ENCODE measurements at regions of chr6 and their contacts with region 1.

Region 1: DNA sequence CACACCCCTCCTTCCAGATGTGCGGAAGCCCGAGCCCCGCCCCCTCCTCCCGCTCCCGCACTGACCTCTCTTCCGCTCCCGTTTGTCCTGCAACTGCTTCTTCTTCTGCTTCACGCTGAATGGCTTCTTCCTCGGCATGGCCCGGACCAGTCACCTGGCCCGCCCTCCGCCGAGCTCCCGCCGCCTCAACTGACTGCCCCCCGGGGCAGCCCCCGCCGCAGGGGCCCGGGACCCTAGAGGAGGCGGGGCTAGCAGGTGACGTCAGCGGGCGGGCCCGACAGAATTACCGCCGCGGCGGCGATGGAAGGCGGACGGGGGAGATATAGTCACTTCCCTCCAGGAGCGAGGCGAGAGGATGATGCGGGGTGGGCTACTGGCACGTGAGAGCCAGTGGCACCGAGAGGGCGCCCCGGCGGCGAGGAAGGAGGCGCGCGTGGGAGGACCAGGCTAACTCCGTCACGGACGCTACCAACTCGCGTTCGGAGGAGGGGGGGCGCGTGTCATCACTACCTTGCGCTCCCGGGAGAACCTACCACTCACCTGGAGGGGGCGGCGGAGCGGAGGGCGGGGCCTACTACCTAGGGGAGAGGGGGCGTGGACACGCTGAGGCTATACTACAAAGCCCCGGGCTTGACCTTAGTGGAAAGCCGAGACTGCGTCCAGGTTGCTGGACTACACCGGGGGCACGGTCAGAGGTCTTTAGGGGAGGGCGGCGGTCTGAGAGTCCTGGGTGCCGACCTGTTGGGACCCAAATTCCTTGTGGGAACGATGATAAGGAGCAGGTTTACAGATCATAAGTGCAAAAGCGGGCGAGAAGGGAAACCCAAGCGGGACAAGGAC is at the start of gene GNL1:
- DNase-seq: peak; percentile 96
- H3K4me3 Mint-ChIP-seq: peak within 1 kb of the TSS; percentile 96
- H3K27ac Mint-ChIP-seq: peak within 1 kb of the TSS; percentile 99
- H3K4me1 Mint-ChIP-seq: peaks cover 36% of the 10 kb centered on the region
- H3K27me3 Mint-ChIP-seq: no peaks in the 10 kb centered on the region
- total RNA-seq, gene GNL1: 86.3 and 92.4 TPM in 2 replicates

Region 2: GRCh38 chr6:30212865-30213666 is 343.2 kb before region 1 on chr6 and contains the start of gene TRIM26:
- intact Hi-C with region 1: loop called (anchors 5 kb)
- DNase-seq: peak; percentile 98
- H3K4me3 Mint-ChIP-seq: peak within 1 kb of the TSS; percentile 88
- H3K27ac Mint-ChIP-seq: peak within 1 kb of the TSS; percentile 97
- H3K4me1 Mint-ChIP-seq: peaks cover 57% of the 10 kb centered on the region
- H3K27me3 Mint-ChIP-seq: no peaks in the 10 kb centered on the region
- total RNA-seq, gene TRIM26: 61.6 and 64.7 TPM in 2 replicates

Region 3: GRCh38 chr6:30489081-30490025 is 66.9 kb before region 1 on chr6 and contains the start of gene HLA-E:
- intact Hi-C with region 1: loop called (anchors 1 kb)
- DNase-seq: peak; percentile 91
- H3K4me3 Mint-ChIP-seq: peak within 1 kb of the TSS; percentile 97
- H3K27ac Mint-ChIP-seq: peak within 1 kb of the TSS; percentile 99
- H3K4me1 Mint-ChIP-seq: peaks cover 64% of the 10 kb centered on the region
- H3K27me3 Mint-ChIP-seq: peaks cover 3% of the 10 kb centered on the region
- total RNA-seq, gene HLA-E: 476 and 483 TPM in 2 replicates

Region 4: DNA sequence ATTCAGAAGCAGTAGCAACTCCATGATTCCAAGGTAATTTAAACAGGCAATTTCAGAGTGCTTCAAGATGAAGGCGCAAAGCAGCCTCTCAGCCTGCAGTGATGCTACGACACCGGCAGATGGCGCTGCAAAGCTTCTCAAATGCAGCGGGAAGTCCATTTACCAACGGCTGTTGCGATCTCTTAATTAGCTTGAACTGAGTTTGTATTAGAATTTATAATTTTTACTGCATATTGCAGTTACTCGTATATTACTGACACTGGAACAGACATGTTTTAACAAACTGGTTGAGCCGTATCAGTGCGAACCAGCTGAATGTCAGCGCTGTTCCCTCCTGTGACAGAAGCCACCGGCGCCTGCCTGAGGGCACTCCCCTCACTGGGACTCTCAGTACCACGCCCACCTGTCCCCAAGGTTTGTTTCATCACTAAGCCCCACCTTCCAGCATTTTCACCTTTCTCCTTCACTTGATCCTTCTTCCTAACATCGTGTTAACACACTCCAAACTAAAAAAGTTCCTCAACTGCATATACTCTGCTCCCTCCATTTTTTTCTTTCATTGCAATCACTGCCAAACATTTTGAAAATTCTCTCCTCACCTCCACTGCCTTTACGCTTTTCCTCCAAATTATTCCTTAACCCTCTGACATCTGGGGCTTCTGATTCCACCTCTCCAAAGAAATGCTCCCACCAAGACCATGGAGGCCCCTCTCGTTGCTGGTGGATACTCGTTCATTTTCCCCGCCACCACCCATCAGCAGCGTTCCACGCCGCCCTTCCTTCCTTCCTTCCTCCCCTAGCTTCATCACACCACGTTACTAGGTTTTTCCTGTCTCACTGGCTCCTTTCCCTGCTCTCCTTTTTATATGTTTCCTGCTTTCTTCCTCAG is 14.5 kb before region 1 on chr6:
- intact Hi-C with region 1: loop called (anchors 1 kb)
- DNase-seq: peak; percentile 69
- H3K4me3 Mint-ChIP-seq: peak overlapping the region; percentile 81
- H3K27ac Mint-ChIP-seq: peak overlapping the region; percentile 78
- H3K4me1 Mint-ChIP-seq: peaks cover 39% of the 10 kb centered on the region
- H3K27me3 Mint-ChIP-seq: no peaks in the 10 kb centered on the region

Region 5: DNA sequence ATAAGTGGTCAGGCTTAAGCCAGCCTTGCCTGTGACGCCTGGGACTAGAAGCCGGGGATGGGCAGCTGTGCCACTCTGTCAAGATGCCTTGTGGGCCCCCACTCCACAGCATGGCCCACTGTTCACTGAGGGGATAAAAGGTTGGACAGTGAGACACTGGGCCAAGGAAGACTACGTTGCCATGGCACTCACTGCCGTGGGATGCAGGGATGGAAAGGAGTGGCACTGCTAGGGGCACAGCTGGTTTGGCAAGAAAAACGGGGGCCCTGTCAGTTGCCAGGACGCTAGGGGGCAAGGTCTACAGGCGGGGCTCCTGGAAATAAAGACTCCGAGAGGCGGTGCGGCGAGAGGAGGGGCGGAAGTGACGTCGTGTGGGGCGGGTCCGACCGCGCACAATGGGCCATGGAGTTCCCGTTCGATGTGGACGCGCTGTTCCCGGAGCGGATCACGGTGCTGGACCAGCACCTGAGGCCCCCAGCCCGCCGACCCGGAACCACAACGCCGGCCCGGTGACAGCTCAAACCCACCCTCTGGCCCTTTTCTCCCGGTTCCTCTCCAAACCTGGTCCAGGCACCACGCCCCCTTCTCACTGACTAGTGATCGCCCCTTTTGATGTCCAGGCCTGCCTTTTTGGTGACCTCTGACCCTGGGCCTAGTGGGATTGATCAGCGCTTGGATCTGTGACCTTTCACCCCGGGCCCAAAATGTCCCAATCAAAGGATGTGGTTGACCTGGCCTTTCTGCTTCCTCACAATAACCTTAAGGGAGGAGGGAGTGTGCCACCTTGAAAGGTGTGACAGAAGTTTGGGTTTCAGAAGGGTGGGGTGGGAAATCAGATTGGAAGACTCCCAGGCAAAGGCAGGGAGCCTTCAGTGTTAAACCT is 70.4 kb after region 1 on chr6 and contains the start of gene ATAT1:
- intact Hi-C with region 1: loop called (anchors 2 kb)
- DNase-seq: peak; percentile 84
- H3K4me3 Mint-ChIP-seq: peak within 1 kb of the TSS; percentile 91
- H3K27ac Mint-ChIP-seq: peak within 1 kb of the TSS; percentile 95
- H3K4me1 Mint-ChIP-seq: peaks cover 27% of the 10 kb centered on the region
- H3K27me3 Mint-ChIP-seq: no peaks in the 10 kb centered on the region
- total RNA-seq, gene ATAT1: 11.6 and 13.4 TPM in 2 replicates